Right cardiac atrium (tissue), 5 donors: ENCODE measurements at regions of chr14 and their contacts with region 1.

Region 1: GRCh38 chr14:32217301-32217700 is 14.2 kb upstream of the RNU6-8 start:
- DNase-seq: no peak
- ATAC-seq: no peak
- H3K4me3 ChIP-seq: no peak overlapping the region
- H3K27ac ChIP-seq: no peak overlapping the region
- H3K4me1 ChIP-seq: no peaks in the 10 kb centered on the region
- H3K27me3 ChIP-seq: no peaks in the 10 kb centered on the region

Region 2: GRCh38 chr14:31717294-31718085 is 499.8 kb before region 1 on chr14:
- intact Hi-C with region 1: loop called in 1 of 4 experiments (anchors 5 kb)
- DNase-seq: no peak
- ATAC-seq: no peak
- H3K4me3 ChIP-seq: no peak overlapping the region
- H3K27ac ChIP-seq: peak overlapping the region; percentile 50
- H3K4me1 ChIP-seq: no peaks in the 10 kb centered on the region
- H3K27me3 ChIP-seq: no peaks in the 10 kb centered on the region

Region 3: DNA sequence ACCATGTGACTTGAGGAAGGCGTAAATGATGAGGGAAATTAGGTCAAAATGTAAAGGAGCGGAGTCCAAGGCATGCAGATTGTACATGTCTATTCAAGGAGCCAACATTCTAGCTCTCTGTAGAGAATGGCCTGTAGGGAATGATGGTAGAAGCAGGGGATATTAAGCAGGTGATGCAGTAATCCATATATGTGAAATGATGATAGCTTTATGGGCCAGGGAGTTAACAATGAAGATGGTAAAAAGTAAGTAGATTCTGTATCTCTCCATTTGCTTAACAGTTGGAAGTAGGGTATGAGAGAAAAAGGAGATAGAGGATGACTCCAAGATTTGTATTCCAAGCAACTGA is 106.8 kb before region 1 on chr14:
- intact Hi-C with region 1: no loop called
- DNase-seq: no peak
- ATAC-seq: no peak
- H3K4me3 ChIP-seq: no peak overlapping the region
- H3K27ac ChIP-seq: no peak overlapping the region
- H3K4me1 ChIP-seq: peaks cover 5% of the 10 kb centered on the region
- H3K27me3 ChIP-seq: no peaks in the 10 kb centered on the region